ENCODE measurements at regions of chr15 and their contacts with region 1.

Region 1: GRCh38 chr15:72783563-72784237 is at the start of gene ADPGK:
- DNase-seq: peak; percentile 88 to 98 (median 94)
- ATAC-seq: peak; percentile 74
- H3K4me3 ChIP-seq: peak within 1 kb of the TSS; percentile 94
- H3K4me3 Mint-ChIP-seq: peak within 1 kb of the TSS; percentile 96
- H3K27ac ChIP-seq: peak within 1 kb of the TSS; percentile 91 to 93
- H3K27ac Mint-ChIP-seq: peak within 1 kb of the TSS; percentile 98
- H3K4me1 ChIP-seq: peaks cover 50% of the 10 kb centered on the region
- H3K4me1 Mint-ChIP-seq: peaks cover 50% of the 10 kb centered on the region
- H3K27me3 ChIP-seq: no peaks in the 10 kb centered on the region
- H3K27me3 Mint-ChIP-seq: no peaks in the 10 kb centered on the region
- CTCF ChIP-seq: no peak
- total RNA-seq, gene ADPGK: 88.8 to 92.5 TPM

Region 2: GRCh38 chr15:72272213-72273002 is 511.3 kb before region 1 on chr15 and contains the start of gene PARP6:
- CTCF ChIA-PET with region 1: no interaction called
- POLR2A ChIA-PET with region 1: no interaction called
- intact Hi-C with region 1: loop called in 1 of 2 experiments (anchors 2 kb)
- DNase-seq: peak; percentile 95 to 100 (median 98)
- ATAC-seq: peak; percentile 94
- H3K4me3 ChIP-seq: peak within 1 kb of the TSS; percentile 89
- H3K4me3 Mint-ChIP-seq: peak within 1 kb of the TSS; percentile 92
- H3K27ac ChIP-seq: peak within 1 kb of the TSS; percentile 76 to 79
- H3K27ac Mint-ChIP-seq: peak within 1 kb of the TSS; percentile 93
- H3K4me1 ChIP-seq: peaks cover 25% of the 10 kb centered on the region
- H3K4me1 Mint-ChIP-seq: peaks cover 47% of the 10 kb centered on the region
- H3K27me3 ChIP-seq: no peaks in the 10 kb centered on the region
- H3K27me3 Mint-ChIP-seq: no peaks in the 10 kb centered on the region
- CTCF ChIP-seq: peak; percentile 80
- total RNA-seq, gene PARP6: 128 to 133 TPM

Region 3: GRCh38 chr15:72599855-72600464 is 183.7 kb before region 1 on chr15:
- CTCF ChIA-PET with region 1: no interaction called
- POLR2A ChIA-PET with region 1: no interaction called
- intact Hi-C with region 1: loop called in 1 of 2 experiments (anchors 10 kb)
- DNase-seq: peak in 4 of 14 experiments; percentile 35 to 58 (median 48)
- ATAC-seq: no peak
- H3K4me3 ChIP-seq: no peak overlapping the region
- H3K4me3 Mint-ChIP-seq: no peak overlapping the region
- H3K27ac ChIP-seq: no peak overlapping the region
- H3K27ac Mint-ChIP-seq: no peak overlapping the region
- H3K4me1 ChIP-seq: no peaks in the 10 kb centered on the region
- H3K4me1 Mint-ChIP-seq: no peaks in the 10 kb centered on the region
- H3K27me3 ChIP-seq: no peaks in the 10 kb centered on the region
- H3K27me3 Mint-ChIP-seq: no peaks in the 10 kb centered on the region
- CTCF ChIP-seq: peak; percentile 79

Region 4: DNA sequence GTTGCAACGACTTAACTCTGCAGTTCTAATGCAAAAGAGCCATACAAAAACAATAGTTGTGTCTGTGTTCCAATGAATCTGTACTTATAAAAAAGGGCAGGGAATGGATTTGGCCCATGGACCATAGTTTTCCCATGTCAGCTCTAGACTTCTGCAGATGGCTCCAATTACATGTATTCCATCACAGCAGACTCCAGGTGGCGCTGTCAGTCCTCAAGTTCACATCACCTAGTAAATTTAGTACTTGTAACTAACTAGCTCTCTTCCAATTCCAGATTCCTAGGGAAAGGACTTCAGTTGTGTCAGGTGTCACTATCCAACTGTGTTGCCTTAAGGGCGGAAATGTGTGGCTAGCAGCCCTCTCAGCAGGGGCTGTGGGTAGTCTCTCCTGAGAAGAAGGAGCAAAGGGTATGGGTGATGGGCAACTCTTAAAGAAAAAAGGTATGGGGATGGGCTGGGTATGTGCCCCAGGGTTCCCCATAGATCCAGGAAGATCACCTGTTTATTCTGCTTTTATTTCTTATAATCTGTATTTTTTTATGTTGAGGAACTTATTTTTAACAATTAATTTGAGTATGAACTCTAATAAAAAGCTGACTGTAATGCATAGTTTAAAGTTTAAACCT is 61.5 kb before region 1 on chr15:
- CTCF ChIA-PET with region 1: no interaction called
- POLR2A ChIA-PET with region 1: interaction called, 7 read pairs
- intact Hi-C with region 1: loop called in 1 of 2 experiments (anchors 5 kb)
- DNase-seq: peak; percentile 51 to 81 (median 65)
- ATAC-seq: peak; percentile 51
- H3K4me3 ChIP-seq: no peak overlapping the region
- H3K4me3 Mint-ChIP-seq: no peak overlapping the region
- H3K27ac ChIP-seq: no peak overlapping the region
- H3K27ac Mint-ChIP-seq: no peak overlapping the region
- H3K4me1 ChIP-seq: no peaks in the 10 kb centered on the region
- H3K4me1 Mint-ChIP-seq: no peaks in the 10 kb centered on the region
- H3K27me3 ChIP-seq: no peaks in the 10 kb centered on the region
- H3K27me3 Mint-ChIP-seq: no peaks in the 10 kb centered on the region
- CTCF ChIP-seq: peak; percentile 92

Region 5: GRCh38 chr15:73051811-73052678 is 268.3 kb after region 1 on chr15 and contains the start of gene NEO1:
- CTCF ChIA-PET with region 1: no interaction called
- POLR2A ChIA-PET with region 1: interaction called, 4 read pairs
- intact Hi-C with region 1: loop called in 1 of 2 experiments (anchors 1 kb)
- DNase-seq: peak; percentile 71 to 93 (median 80)
- ATAC-seq: peak; percentile 81
- H3K4me3 ChIP-seq: peak within 1 kb of the TSS; percentile 85
- H3K4me3 Mint-ChIP-seq: peak within 1 kb of the TSS; percentile 91
- H3K27ac ChIP-seq: peak within 1 kb of the TSS in 1 of 2 donors; percentile 50
- H3K27ac Mint-ChIP-seq: peak within 1 kb of the TSS; percentile 85
- H3K4me1 ChIP-seq: peaks cover 11% of the 10 kb centered on the region
- H3K4me1 Mint-ChIP-seq: peaks cover 14% of the 10 kb centered on the region
- H3K27me3 ChIP-seq: peaks cover 0 to 7% of the 10 kb centered on the region in 2 experiments
- H3K27me3 Mint-ChIP-seq: peaks cover 11% of the 10 kb centered on the region
- CTCF ChIP-seq: no peak
- total RNA-seq, gene NEO1: 6.0 to 8.0 TPM

Region 6: GRCh38 chr15:73273181-73274002 is 489.7 kb after region 1 on chr15:
- CTCF ChIA-PET with region 1: no interaction called
- POLR2A ChIA-PET with region 1: no interaction called
- intact Hi-C with region 1: loop called in 1 of 2 experiments (anchors 5 kb)
- DNase-seq: peak in 13 of 14 experiments; percentile 5 to 68 (median 32)
- ATAC-seq: peak; percentile 65
- H3K4me3 ChIP-seq: no peak overlapping the region
- H3K4me3 Mint-ChIP-seq: no peak overlapping the region
- H3K27ac ChIP-seq: no peak overlapping the region
- H3K27ac Mint-ChIP-seq: no peak overlapping the region
- H3K4me1 ChIP-seq: no peaks in the 10 kb centered on the region
- H3K4me1 Mint-ChIP-seq: no peaks in the 10 kb centered on the region
- H3K27me3 ChIP-seq: no peaks in the 10 kb centered on the region
- H3K27me3 Mint-ChIP-seq: no peaks in the 10 kb centered on the region
- CTCF ChIP-seq: peak; percentile 72

Region 7: DNA sequence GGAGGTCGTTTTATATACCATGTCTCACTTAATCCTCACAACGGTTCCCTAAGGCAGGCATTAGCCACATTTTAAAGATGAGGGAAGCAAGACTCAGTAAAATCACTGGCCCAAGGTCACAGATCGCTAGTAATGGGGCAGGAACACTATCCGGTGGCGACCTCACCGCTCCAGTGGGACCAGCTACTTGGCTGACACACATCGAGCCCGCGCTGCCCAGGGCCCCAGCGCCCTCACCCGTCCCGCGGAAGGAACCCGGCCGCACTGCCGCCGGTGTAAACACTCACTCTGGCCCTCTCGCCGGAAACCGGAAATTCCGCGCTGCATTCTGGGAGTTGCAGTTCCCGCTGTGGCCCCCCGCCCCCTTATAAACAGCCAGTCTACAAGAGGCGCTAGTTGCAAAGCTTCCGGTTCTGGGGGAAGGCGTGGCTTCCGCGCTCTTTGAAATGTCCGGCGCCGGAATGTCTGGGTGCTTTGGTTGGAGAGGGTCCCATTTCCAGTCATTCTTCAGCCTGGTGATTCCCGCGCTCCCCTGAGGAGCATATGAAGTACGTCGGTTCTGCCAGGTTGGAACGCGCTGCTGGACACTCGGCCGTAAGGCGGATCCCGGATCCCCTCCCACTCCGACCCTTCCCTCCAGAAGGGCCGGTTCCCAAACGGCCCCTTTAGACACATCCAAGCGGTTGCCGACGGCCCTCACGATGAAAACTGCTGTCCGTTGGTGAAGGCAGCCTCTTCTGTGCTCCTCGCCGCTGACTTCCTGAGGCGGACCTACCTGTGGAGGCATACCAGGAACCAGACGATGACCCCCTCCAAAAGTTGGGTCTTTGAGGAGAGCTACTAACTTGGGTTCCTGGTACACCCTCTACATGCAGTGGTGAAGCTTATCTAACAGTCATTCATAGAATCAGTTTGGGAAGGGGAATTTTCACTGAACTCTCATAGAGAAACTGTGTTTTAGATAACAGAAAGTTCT is 1677.5 kb after region 1 on chr15 and contains the start of gene UBL7:
- CTCF ChIA-PET with region 1: no interaction called
- POLR2A ChIA-PET with region 1: no interaction called
- intact Hi-C with region 1: loop called in 1 of 2 experiments (anchors 5 kb)
- DNase-seq: peak; percentile 91 to 97 (median 96)
- ATAC-seq: peak; percentile 98
- H3K4me3 ChIP-seq: peak within 1 kb of the TSS; percentile 92
- H3K4me3 Mint-ChIP-seq: peak within 1 kb of the TSS; percentile 97
- H3K27ac ChIP-seq: peak within 1 kb of the TSS; percentile 61 to 62
- H3K27ac Mint-ChIP-seq: peak within 1 kb of the TSS; percentile 84
- H3K4me1 ChIP-seq: peaks cover 19% of the 10 kb centered on the region
- H3K4me1 Mint-ChIP-seq: peaks cover 53% of the 10 kb centered on the region
- H3K27me3 ChIP-seq: no peaks in the 10 kb centered on the region
- H3K27me3 Mint-ChIP-seq: no peaks in the 10 kb centered on the region
- CTCF ChIP-seq: peak; percentile 15
- total RNA-seq, gene UBL7: 14.3 to 17.1 TPM

Measured in CD4-positive, alpha-beta T cell (primary cell).